Posterior vena cava (tissue), 2 donors: ENCODE measurements at regions of chr9 and their contacts with region 1.

Region 1: DNA sequence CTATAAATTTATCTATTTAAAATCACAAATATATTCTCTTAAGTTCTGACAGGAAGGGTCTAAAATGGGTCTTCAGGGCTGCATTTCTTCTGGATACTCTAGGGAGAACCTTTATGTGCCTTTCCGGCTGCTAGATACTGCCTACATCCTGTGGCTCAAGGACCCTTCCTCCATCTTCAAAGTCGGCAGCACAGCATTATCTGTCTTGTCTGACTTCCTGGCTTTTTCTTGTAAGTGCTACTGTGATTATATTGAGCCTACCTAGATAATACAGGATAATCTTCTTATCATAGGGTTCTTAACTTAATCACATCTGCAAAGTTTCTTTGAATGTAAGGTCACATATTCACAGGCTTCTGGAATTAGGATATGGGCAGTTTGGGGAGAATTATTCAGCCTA is 943.8 kb upstream of the TYRP1 start:
- DNase-seq: no peak

Region 2: GRCh38 chr9:11686733-11687132 is 62.7 kb before region 1 on chr9:
- intact Hi-C with region 1: loop called in 1 of 2 experiments (anchors 2 kb)
- DNase-seq: no peak